Common myeloid progenitor, CD34-positive (primary cell): ENCODE measurements at regions of chr12 and their contacts with region 1.

Region 1: GRCh38 chr12:6647083-6647604 is at the start of gene ACRBP:
- DNase-seq: peak; percentile 51 to 71 (median 65)
- H3K4me3 ChIP-seq: peak within 1 kb of the TSS; percentile 14 to 91 (median 77)
- H3K27ac ChIP-seq: peak within 1 kb of the TSS in 1 of 2 experiments; percentile 73
- H3K4me1 ChIP-seq: peaks cover 3 to 29% (median 15%) of the 10 kb centered on the region in 4 experiments
- H3K27me3 ChIP-seq: no peaks in the 10 kb centered on the region

Region 2: GRCh38 chr12:6613776-6614512 is 33.2 kb before region 1 on chr12:
- CTCF ChIA-PET with region 1: interaction called, 69 read pairs
- POLR2A ChIA-PET with region 1: interaction called, 6 read pairs
- DNase-seq: peak; percentile 96 to 99 (median 98)
- H3K4me3 ChIP-seq: no peak overlapping the region
- H3K27ac ChIP-seq: peak overlapping the region in 1 of 2 experiments; percentile 72
- H3K4me1 ChIP-seq: peaks cover 16 to 65% (median 49%) of the 10 kb centered on the region in 4 experiments
- H3K27me3 ChIP-seq: no peaks in the 10 kb centered on the region

Region 3: GRCh38 chr12:6662906-6663742 is 16.0 kb after region 1 on chr12 and contains the start of gene ING4:
- CTCF ChIA-PET with region 1: interaction called, 15 read pairs
- POLR2A ChIA-PET with region 1: interaction called, 3 read pairs
- DNase-seq: peak; percentile 99 to 100 (median 99)
- H3K4me3 ChIP-seq: peak within 1 kb of the TSS; percentile 57 to 95 (median 87)
- H3K27ac ChIP-seq: peak within 1 kb of the TSS; percentile 90 to 91
- H3K4me1 ChIP-seq: peaks cover 8 to 16% (median 13%) of the 10 kb centered on the region in 4 experiments
- H3K27me3 ChIP-seq: no peaks in the 10 kb centered on the region